ENCODE measurements at regions of chr22 and their contacts with region 1.

Region 1: DNA sequence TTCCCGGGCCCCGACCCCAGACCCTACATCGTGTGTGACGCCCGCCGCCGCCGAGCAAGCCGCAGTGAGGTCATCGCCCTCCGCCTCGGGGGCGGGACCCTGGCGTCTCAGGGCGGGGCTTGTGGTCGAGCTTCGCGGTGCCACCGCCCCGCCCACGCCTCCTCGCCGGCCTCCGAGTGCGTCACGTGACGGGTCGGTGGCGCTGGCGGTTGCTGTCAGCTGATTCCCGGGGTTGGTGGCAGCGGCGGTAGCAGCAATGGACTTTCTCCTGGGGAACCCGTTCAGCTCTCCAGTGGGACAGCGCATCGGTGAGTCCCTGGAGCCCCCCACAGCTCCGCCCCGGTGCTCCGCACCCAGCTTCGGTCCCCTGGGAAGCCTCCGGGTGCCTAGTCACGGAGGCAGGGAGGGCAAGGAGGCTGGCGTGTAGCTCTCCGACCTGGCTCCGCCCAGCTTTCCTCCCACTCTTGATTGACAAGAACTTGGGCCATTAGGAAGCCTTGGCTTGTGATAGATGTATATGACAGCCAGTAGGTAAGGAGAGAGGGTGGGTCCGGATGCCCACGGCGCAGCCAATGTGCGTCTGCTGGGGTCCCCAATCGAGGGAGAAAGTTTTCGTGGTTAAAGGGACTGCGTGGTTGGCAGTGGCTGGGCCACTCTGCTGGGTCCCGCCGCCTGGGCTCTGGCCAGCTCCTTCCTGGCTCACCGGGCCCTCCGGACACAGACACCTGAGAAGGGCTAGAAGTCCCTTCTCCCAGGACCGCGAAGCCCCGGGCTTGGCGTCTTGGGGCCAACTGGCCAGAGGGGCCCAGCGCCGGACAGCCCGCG is at the start of gene TOM1:
- DNase-seq: peak; percentile 97 to 100 (median 98)
- H3K4me3 ChIP-seq: peak within 1 kb of the TSS; percentile 53 to 90
- H3K4me3 Mint-ChIP-seq: peak within 1 kb of the TSS; percentile 94 to 100 (median 96)
- H3K27ac ChIP-seq: peak within 1 kb of the TSS; percentile 96
- H3K27ac Mint-ChIP-seq: peak within 1 kb of the TSS; percentile 98 to 100 (median 100)
- H3K4me1 ChIP-seq: peaks cover 26% of the 10 kb centered on the region
- H3K4me1 Mint-ChIP-seq: peaks cover 21 to 51% (median 35%) of the 10 kb centered on the region in 4 donors
- H3K27me3 ChIP-seq: no peaks in the 10 kb centered on the region
- H3K27me3 Mint-ChIP-seq: peaks cover 0 to 1% of the 10 kb centered on the region in 2 donors
- total RNA-seq, gene TOM1: 76.1 to 82.2 TPM

Region 2: GRCh38 chr22:35257321-35258190 is 42.3 kb before region 1 on chr22 and contains the start of gene HMGXB4:
- CTCF ChIA-PET with region 1: interaction called, 8 read pairs
- POLR2A ChIA-PET with region 1: interaction called, 55 read pairs
- intact Hi-C with region 1: loop called (anchors 1 kb)
- DNase-seq: peak; percentile 86 to 90 (median 88)
- H3K4me3 ChIP-seq: peak within 1 kb of the TSS; percentile 63 to 73
- H3K4me3 Mint-ChIP-seq: peak within 1 kb of the TSS; percentile 93 to 96 (median 94)
- H3K27ac ChIP-seq: peak within 1 kb of the TSS; percentile 92
- H3K27ac Mint-ChIP-seq: peak within 1 kb of the TSS; percentile 90 to 98 (median 97)
- H3K4me1 ChIP-seq: peaks cover 18% of the 10 kb centered on the region
- H3K4me1 Mint-ChIP-seq: peaks cover 20 to 36% (median 25%) of the 10 kb centered on the region in 4 donors
- H3K27me3 ChIP-seq: no peaks in the 10 kb centered on the region
- H3K27me3 Mint-ChIP-seq: no peaks in the 10 kb centered on the region
- total RNA-seq, gene HMGXB4: 22.1 to 25.3 TPM

Region 3: DNA sequence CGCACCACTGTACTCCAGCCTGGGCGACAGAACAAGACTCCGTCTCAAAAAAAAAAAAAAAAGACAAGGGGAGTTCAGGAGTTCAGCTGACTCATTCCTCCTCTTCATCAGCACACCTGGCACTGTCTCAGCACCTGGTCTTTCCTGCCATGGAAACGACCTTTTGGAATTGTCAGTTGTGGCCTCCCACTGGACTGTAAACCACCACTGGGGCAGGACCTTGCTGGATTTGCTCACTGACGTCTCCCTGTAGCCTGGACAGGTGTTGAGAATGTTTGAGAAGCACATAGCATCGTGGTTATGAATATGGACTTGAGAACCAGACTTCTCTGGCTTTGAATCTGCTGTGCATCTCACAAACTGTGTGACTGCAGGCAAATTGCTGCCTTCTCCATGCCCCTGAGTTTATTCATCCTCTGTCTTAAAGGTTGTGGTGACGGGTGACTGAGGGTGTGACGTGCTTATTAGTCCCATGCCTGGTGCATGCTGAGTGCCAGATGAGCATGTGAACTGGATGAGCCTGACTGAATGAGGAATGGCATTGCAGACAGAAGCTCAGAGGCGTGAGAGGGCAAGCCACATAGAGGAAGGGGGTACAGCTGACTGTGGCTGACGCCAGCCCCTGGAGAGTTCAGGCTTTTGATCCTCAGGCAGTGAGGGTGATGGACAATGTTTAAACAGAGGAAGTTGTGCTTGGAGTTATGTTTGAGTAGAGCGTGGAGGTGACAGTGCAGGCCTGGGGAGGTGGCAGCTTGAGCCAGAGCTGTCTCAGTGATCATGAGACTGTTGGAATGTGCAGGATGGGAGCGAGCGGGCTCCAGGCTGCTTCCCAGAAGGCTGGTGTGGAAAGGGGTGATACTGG is 12.5 kb after region 1 on chr22:
- CTCF ChIA-PET with region 1: interaction called, 4 read pairs
- POLR2A ChIA-PET with region 1: interaction called, 42 read pairs
- intact Hi-C with region 1: no loop called
- DNase-seq: no peak
- H3K4me3 ChIP-seq: no peak overlapping the region
- H3K4me3 Mint-ChIP-seq: peak overlapping the region in 4 of 8 donors; percentile 2 to 42 (median 34)
- H3K27ac ChIP-seq: no peak overlapping the region
- H3K27ac Mint-ChIP-seq: peak overlapping the region; percentile 6 to 84 (median 47)
- H3K4me1 ChIP-seq: peaks cover 87% of the 10 kb centered on the region
- H3K4me1 Mint-ChIP-seq: peaks cover 54 to 87% (median 79%) of the 10 kb centered on the region in 4 donors
- H3K27me3 ChIP-seq: no peaks in the 10 kb centered on the region
- H3K27me3 Mint-ChIP-seq: no peaks in the 10 kb centered on the region

Region 4: GRCh38 chr22:35330258-35330861 is 30.5 kb after region 1 on chr22:
- CTCF ChIA-PET with region 1: interaction called, 26 read pairs
- POLR2A ChIA-PET with region 1: interaction called, 34 read pairs
- intact Hi-C with region 1: loop called (anchors 1 kb)
- DNase-seq: peak; percentile 50 to 76 (median 52)
- H3K4me3 ChIP-seq: no peak overlapping the region
- H3K4me3 Mint-ChIP-seq: peak overlapping the region; percentile 24 to 81 (median 70)
- H3K27ac ChIP-seq: peak overlapping the region; percentile 30
- H3K27ac Mint-ChIP-seq: peak overlapping the region; percentile 86 to 97 (median 93)
- H3K4me1 ChIP-seq: peaks cover 49% of the 10 kb centered on the region
- H3K4me1 Mint-ChIP-seq: peaks cover 17 to 59% (median 38%) of the 10 kb centered on the region in 4 donors
- H3K27me3 ChIP-seq: no peaks in the 10 kb centered on the region
- H3K27me3 Mint-ChIP-seq: no peaks in the 10 kb centered on the region

Region 5: GRCh38 chr22:35399678-35400334 is 99.9 kb after region 1 on chr22 and contains the start of gene MCM5:
- CTCF ChIA-PET with region 1: interaction called, 3 read pairs
- POLR2A ChIA-PET with region 1: interaction called, 8 read pairs
- intact Hi-C with region 1: loop called (anchors 1 kb)
- DNase-seq: peak; percentile 97 to 98 (median 98)
- H3K4me3 ChIP-seq: peak within 1 kb of the TSS; percentile 88
- H3K4me3 Mint-ChIP-seq: peak within 1 kb of the TSS; percentile 96 to 100 (median 99)
- H3K27ac ChIP-seq: peak within 1 kb of the TSS; percentile 59
- H3K27ac Mint-ChIP-seq: peak within 1 kb of the TSS; percentile 97 to 99 (median 97)
- H3K4me1 ChIP-seq: peaks cover 22% of the 10 kb centered on the region
- H3K4me1 Mint-ChIP-seq: peaks cover 11 to 33% (median 20%) of the 10 kb centered on the region in 4 donors
- H3K27me3 ChIP-seq: no peaks in the 10 kb centered on the region
- H3K27me3 Mint-ChIP-seq: no peaks in the 10 kb centered on the region
- total RNA-seq, gene MCM5: 48.5 to 58.1 TPM

Region 6: DNA sequence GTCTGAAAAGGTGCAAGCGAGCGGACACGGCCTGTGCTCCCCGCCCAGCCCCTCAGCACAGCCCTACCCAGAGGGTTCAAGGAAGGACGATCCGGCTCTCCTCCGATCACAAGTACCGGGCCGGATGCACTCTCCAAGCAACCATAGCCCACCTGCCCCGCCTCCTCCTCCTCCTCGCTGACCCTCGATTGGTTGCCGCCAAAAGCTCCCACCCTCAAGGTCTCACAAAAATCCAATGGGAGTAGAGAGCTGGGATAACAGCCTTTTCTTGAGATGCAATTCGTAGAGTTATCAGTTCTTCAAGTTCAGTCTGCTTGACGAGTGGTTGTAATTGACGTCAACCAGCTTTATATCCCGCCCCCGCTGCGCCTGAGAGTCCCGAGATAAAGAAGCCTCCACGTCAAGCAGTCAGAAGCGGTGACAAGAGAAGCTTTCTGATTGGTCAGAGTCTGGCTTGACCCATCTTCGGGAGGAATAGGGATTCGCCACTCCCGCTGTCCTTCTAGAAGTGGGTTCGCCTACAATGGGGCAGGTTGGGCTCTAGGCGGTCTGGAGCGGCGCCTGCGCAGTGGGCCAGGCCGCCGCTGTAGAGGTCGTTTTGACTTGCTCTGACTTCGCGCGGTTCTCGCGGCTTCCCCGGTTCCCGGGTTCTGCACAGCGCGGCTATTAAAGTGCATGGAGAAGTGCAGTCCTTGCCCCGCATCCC is 1476.2 kb after region 1 on chr22 and contains the start of gene IFT27:
- CTCF ChIA-PET with region 1: no interaction called
- POLR2A ChIA-PET with region 1: no interaction called
- intact Hi-C with region 1: loop called (anchors 10 kb)
- DNase-seq: peak; percentile 96 to 100 (median 99)
- H3K4me3 ChIP-seq: peak within 1 kb of the TSS; percentile 51 to 64
- H3K4me3 Mint-ChIP-seq: peak within 1 kb of the TSS; percentile 89 to 97 (median 92)
- H3K27ac ChIP-seq: peak within 1 kb of the TSS; percentile 73
- H3K27ac Mint-ChIP-seq: peak within 1 kb of the TSS; percentile 93 to 99 (median 98)
- H3K4me1 ChIP-seq: peaks cover 17% of the 10 kb centered on the region
- H3K4me1 Mint-ChIP-seq: peaks cover 16 to 32% (median 24%) of the 10 kb centered on the region in 4 donors
- H3K27me3 ChIP-seq: no peaks in the 10 kb centered on the region
- H3K27me3 Mint-ChIP-seq: no peaks in the 10 kb centered on the region
- total RNA-seq, gene IFT27: 38.2 to 42.6 TPM